PC-3 (cell line): ENCODE measurements at regions of chr16 and their contacts with region 1.

Region 1: GRCh38 chr16:7772722-7773121 is 440.1 kb downstream of the RBFOX1 start:
- DNase-seq: no peak
- ATAC-seq: no peak
- H3K4me3 ChIP-seq: no peak overlapping the region
- H3K27ac ChIP-seq: no peak overlapping the region
- H3K4me1 ChIP-seq: no peaks in the 10 kb centered on the region
- H3K27me3 ChIP-seq: no peaks in the 10 kb centered on the region
- CTCF ChIP-seq: no peak

Region 2: DNA sequence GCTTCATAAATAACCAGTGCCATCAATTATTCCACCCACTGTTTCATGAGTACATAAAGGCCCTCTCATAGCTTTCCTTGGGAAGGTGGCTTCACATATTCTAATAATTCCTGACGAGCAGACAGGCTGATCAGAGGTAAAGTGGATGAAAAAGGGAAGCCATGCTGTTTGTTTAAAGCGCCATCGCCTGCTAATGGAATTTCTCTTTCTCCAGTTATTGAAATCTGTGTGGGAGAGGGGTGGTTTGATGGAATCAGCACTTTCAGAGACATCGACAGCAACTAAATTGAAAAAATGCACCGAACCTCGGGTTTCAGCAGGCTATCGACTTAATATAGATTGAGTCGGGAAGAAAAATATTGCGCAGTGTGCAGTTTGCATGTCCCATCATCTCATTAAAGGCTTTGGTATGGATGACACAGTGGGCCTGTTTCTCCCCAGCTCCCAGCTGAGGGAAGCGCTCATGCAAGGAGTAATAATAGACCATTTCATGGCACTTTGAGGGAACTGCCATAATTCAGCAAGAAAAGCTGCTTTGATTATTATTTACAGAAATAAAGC is 32.0 kb after region 1 on chr16:
- CTCF ChIA-PET with region 1: no interaction called
- POLR2A ChIA-PET with region 1: interaction called, 12 read pairs
- intact Hi-C with region 1: no loop called
- DNase-seq: no peak
- ATAC-seq: no peak
- H3K4me3 ChIP-seq: no peak overlapping the region
- H3K27ac ChIP-seq: no peak overlapping the region
- H3K4me1 ChIP-seq: no peaks in the 10 kb centered on the region
- H3K27me3 ChIP-seq: no peaks in the 10 kb centered on the region
- CTCF ChIP-seq: no peak

Region 3: DNA sequence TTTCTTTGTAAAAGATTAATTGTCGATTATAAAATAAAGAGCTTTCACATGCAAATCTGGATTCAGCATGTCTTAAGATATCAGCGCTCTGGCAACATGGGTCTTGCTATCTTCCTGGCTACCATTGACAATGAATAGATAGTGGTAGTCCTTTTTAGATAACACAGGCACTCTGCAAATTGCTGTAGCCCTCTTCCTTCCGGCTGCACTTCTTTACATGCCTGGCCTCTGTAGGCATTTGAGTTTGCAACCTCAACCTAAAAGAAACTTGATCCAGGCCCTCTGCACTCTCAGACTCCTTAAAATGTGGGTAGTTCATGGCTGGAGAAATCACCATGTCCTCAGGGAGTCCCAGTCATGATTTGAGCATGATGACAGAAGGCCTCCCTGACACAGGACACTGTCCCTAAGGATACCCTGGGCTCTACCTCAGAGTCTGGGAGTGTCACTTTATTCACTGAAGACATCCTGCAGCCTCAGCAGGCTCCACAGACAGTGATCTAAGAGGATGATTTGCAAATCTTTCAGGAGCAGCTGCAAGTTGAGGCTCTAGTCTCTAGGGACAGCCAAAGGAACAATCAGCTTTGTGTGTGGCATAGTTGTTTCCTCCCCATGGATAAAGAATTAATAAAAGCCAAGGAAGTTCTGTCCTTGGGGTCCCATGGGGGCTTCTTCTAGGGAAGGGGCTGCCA is 89.3 kb after region 1 on chr16:
- CTCF ChIA-PET with region 1: no interaction called
- POLR2A ChIA-PET with region 1: no interaction called
- intact Hi-C with region 1: no loop called
- DNase-seq: no peak
- ATAC-seq: no peak
- H3K4me3 ChIP-seq: no peak overlapping the region
- H3K27ac ChIP-seq: no peak overlapping the region
- H3K4me1 ChIP-seq: no peaks in the 10 kb centered on the region
- H3K27me3 ChIP-seq: no peaks in the 10 kb centered on the region
- CTCF ChIP-seq: no peak